Thyroid gland (tissue), 4 donors: ENCODE measurements at regions of chr2 and their contacts with region 1.

Region 1: DNA sequence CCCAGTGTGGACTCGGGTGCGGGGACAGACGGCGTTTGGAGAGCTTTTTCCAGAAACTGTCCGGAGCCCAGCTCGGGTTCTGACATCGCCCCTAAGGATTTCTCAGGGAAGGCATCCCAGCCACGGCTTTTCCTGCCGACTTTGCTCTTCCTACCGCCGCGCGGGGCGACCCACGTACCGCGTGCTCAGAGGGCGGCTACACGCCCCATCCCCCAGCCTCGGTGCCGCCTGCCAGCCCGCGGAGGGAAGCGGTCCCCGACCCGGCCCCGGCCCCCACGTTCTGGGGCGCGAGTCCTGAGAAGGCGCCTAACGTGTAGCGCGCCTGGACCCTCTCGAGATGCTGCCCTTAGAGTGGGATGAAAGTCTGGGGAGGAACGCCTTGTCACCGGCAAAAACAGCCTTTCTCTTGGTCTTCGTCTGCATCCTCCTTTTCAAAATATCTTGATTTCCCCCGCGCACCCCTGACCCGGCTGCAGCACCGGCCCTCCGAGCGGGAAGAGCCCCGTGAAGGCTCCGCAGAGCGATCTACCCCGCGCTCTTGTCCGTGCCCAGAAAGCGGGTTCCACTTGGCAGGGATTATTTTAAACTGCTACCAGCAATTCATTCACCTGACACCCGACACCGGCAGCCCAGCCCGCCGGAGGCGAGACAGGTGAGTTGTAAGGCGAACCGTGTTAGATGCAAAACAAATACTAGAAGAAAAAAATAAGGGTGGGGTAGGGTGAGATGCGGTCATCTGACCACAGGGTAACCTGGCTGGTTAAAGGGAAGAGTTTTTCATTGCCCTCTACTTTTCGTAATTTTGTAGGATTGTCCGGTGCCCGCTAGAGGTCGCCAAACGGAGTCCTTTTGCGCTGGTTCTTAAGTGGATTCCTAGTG is 812 bp upstream of the KCNG3 start:
- DNase-seq: peak; percentile 68 to 76
- H3K4me3 ChIP-seq: peak overlapping the region; percentile 31 to 57 (median 41)
- H3K27ac ChIP-seq: no peak overlapping the region
- H3K4me1 ChIP-seq: peaks cover 7 to 15% of the 10 kb centered on the region in 2 donors
- H3K27me3 ChIP-seq: no peaks in the 10 kb centered on the region
- CTCF ChIP-seq: peak; percentile 65 to 85 (median 74)
- POLR2A ChIP-seq: no peak

Region 2: DNA sequence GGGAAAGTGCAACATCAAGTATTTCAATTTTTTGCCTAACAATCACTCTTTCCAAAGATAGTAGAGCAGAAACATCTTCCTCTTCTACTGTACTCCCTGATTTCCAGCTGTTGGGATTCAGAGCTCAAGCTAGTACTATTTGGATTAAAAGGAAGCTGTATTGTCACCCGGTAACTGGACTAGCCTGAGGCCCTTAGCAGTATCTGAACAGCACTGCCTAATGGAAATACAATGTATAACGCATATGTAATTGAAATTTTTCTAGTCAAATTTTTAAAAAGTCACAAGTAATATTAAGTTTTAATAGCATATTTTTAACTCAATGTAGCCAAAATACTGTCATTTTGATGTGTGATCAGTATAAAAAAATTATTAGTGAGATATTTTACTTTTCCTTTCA is 219.7 kb before region 1 on chr2:
- intact Hi-C with region 1: no loop called
- DNase-seq: no peak
- H3K4me3 ChIP-seq: no peak overlapping the region
- H3K27ac ChIP-seq: no peak overlapping the region
- H3K4me1 ChIP-seq: peaks cover 0 to 5% of the 10 kb centered on the region in 2 donors
- H3K27me3 ChIP-seq: no peaks in the 10 kb centered on the region
- CTCF ChIP-seq: no peak
- POLR2A ChIP-seq: no peak

Region 3: DNA sequence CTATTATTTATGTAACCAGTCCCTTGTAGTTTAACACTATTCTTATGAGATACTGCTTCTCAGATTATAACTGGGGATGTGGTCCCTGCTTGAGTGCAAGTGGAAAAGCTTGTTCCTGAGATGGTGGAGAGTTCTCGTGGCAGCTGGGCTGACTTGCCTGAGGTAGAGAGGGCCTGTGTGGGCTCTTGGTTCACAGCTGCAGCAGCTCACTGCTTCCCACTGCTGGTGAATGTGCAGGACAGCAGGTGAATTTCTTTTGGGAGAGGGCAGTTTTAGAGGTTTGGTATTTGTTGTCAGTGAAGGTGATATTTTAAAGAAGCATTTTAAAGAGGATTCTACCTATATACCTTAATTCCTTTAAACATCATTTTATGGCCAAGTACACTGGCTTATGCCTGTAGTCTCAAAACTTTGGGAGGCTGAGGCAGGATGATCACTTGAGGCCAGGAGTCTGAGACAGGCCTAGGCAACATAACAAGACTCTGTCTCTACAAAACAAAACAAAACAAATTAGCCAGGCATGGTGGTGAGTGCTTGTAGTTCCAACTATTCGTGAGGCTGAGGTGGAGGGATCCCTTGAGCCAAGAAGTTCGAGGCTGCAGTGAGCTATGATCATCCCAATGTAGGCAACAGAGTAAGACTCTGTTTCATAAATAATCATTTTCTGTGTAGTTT is 168.6 kb after region 1 on chr2:
- intact Hi-C with region 1: loop called (anchors 10 kb)
- DNase-seq: peak; percentile 71 to 75
- H3K4me3 ChIP-seq: no peak overlapping the region
- H3K27ac ChIP-seq: no peak overlapping the region
- H3K4me1 ChIP-seq: peaks cover 4 to 5% of the 10 kb centered on the region in 2 donors
- H3K27me3 ChIP-seq: no peaks in the 10 kb centered on the region
- CTCF ChIP-seq: peak; percentile 86 to 99 (median 95)
- POLR2A ChIP-seq: no peak